Heart right ventricle (tissue), 16 donors: ENCODE measurements at regions of chrX and their contacts with region 1.

Region 1: GRCh38 chrX:119729408-119730201 is 28.8 kb upstream of the SOWAHD start:
- DNase-seq: peak; percentile 16 to 45
- ATAC-seq: peak in 2 of 8 donors; percentile 41 to 45
- H3K4me3 ChIP-seq: no peak overlapping the region
- H3K27ac ChIP-seq: no peak overlapping the region
- H3K4me1 ChIP-seq: peaks cover 0 to 8% (median 0%) of the 10 kb centered on the region in 9 donors
- H3K27me3 ChIP-seq: no peaks in the 10 kb centered on the region
- CTCF ChIP-seq: peak; percentile 31 to 70 (median 62)

Region 2: GRCh38 chrX:119516157-119516702 is 213.4 kb before region 1 on chrX:
- intact Hi-C with region 1: loop called in 8 of 10 experiments (anchors 2 to 10 kb)
- DNase-seq: peak in 1 of 2 donors; percentile 19
- ATAC-seq: peak; percentile 66 to 89 (median 80)
- H3K4me3 ChIP-seq: no peak overlapping the region
- H3K27ac ChIP-seq: no peak overlapping the region
- H3K4me1 ChIP-seq: no peaks in the 10 kb centered on the region
- H3K27me3 ChIP-seq: peaks cover 0 to 2% (median 0%) of the 10 kb centered on the region in 7 donors
- CTCF ChIP-seq: peak; percentile 44 to 77 (median 71)

Region 3: DNA sequence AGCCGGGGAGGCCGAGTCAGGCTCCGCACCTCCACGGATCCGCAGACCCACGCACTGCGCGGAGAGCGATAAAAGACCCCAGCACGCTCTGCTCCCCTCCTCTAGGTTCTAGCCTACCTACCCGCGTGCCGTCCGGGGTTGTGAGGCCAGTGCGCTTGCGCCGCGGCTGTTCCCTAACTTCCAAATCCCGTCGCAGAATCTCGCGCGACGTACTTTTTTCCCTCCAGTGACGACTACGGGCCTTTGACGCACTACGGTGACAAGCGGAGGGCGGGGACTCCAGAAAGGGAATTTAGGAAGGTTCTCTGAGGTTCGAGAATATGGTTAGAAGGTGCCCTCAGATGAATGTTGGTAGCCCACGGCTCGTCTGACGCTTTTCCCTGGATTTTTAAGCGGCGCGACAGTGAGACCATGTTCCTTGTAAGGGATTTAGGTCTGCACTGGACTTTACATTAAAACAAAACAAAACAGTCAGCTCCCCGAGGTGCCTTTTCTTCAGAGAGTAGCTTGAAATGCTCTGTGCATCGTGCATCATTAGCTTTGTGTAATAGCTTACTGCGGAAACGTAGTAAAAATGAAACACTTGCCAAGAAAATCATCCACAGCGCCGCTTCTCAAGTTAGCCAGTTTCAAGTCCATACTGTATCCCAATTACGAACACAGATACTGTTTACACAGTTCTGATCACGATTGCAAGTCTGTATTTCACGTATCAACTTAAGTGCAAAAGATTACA is 123.2 kb before region 1 on chrX and contains the start of gene NKRF:
- intact Hi-C with region 1: loop called in 7 of 10 experiments (anchors 2 to 10 kb)
- DNase-seq: peak; percentile 92 to 93
- ATAC-seq: peak; percentile 94 to 99 (median 96)
- H3K4me3 ChIP-seq: peak within 1 kb of the TSS; percentile 60 to 84 (median 68)
- H3K27ac ChIP-seq: peak within 1 kb of the TSS; percentile 70 to 94 (median 91)
- H3K4me1 ChIP-seq: peaks cover 0 to 8% (median 0%) of the 10 kb centered on the region in 9 donors
- H3K27me3 ChIP-seq: peaks cover 0 to 9% (median 0%) of the 10 kb centered on the region in 7 donors
- CTCF ChIP-seq: no peak
- total RNA-seq, gene NKRF: 4.2 to 5.9 (median 4.6) TPM

Region 4: GRCh38 chrX:119617517-119618164 is 112.0 kb before region 1 on chrX:
- intact Hi-C with region 1: loop called in 5 of 10 experiments (anchors 5 to 10 kb)
- DNase-seq: no peak
- ATAC-seq: no peak
- H3K4me3 ChIP-seq: no peak overlapping the region
- H3K27ac ChIP-seq: peak overlapping the region in 1 of 10 donors; percentile 75
- H3K4me1 ChIP-seq: peaks cover 0 to 31% (median 0%) of the 10 kb centered on the region in 9 donors
- H3K27me3 ChIP-seq: no peaks in the 10 kb centered on the region
- CTCF ChIP-seq: no peak